ENCODE measurements at regions of chr12 and their contacts with region 1.

Region 1: GRCh38 chr12:8687846-8688601 is 9.8 kb upstream of the RIMKLB start:
- DNase-seq: peak in 1 of 10 donors; percentile 27

Region 2: DNA sequence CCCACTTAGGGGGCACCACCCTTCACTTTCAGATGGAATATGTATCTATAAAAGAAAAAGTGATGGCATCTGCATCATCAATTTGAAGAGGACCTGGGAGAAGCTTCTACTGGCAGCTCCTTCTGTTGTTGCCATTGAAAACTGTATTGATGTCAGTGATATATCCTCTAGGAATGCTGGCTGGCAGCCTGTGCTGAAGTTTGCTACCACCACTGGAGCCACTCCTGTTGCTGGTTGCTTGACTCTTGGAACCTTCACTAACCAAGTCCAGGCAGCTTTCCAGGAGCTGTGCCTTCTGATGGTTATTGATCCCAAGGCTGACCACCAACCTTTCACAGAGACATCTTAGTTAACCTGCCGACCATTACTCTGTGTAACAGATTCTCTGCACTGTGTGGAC is 54.5 kb after region 1 on chr12:
- intact Hi-C with region 1: no loop called
- DNase-seq: no peak

Region 3: DNA sequence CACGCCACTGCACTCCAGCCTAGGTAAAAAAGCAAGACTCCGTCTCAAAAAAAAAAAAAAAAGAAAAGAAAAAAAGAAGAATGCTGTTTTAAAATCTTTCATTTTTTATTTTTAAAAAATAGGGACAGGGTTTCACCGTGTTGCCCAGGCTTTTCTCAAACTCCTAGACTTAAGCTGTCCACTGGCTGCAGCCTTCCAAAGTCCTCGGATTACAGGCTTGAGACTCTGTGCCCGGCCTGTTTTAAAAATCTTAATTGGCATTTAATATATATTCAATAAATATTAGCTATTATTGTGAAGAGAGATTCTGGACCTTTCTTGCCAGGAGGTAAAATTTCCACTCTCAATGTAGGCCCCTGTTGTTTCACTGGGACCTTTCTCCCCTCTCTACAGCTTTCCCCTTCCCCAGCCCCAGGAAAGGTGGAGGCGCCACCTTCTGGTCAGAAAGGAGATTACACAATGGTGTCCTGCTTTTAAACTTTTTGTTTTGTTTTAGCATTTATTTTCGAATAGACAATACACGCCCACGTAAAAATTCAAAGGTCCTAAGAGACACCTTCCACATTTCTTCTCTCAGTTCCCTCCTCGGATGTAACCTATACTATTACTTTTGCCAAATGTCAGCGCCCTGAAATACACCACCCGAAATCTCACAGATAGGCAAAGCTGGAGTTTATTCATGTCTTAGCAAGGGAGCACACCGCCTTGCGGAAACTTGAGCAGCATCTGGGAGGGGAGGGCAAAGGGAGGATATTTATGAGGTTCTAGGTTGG is 202.5 kb after region 1 on chr12:
- intact Hi-C with region 1: loop called (anchors 2 kb)
- DNase-seq: peak in 4 of 10 donors; percentile 27 to 58 (median 54)

Region 4: DNA sequence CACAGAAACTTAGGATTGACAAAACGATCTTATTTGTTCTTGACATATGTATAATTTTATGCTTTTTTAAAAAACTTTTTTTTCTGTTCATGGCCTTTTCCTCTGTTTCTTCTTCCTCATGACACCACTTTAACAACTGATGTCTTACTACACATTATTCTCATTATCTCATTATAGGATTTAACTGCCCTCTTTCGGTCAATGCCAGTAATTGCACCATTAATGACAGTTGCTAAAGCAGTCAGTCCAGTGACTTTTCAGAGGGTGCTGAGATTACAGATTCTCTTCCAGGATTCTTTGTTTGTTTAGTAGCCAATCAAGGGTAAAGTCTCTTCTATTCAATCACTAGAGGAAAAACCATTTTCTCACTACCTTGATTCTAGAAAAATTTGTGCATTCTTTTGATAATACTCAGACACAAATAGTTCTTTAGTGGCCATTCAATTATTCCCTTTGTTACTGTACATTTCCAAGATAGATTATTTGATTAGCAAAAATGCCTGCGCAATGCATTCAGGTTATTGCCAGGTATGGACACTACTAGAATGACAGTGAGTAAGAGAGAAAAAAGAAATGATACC is 351.5 kb after region 1 on chr12:
- intact Hi-C with region 1: loop called (anchors 2 kb)
- DNase-seq: no peak